ENCODE measurements at regions of chr19 and their contacts with region 1.

Region 1: GRCh38 chr19:54674021-54674617 is 11.3 kb downstream of the LILRB4 start:
- DNase-seq: no peak
- ATAC-seq: peak; percentile 79
- H3K4me3 ChIP-seq: no peak overlapping the region
- H3K27ac ChIP-seq: no peak overlapping the region
- H3K4me1 ChIP-seq: no peaks in the 10 kb centered on the region
- H3K27me3 ChIP-seq: peaks cover 0 to 5% of the 10 kb centered on the region in 2 experiments; a peak in 2 of 4 replicates
- CTCF ChIP-seq: peak; percentile 57 to 74 (median 74)
- EP300 ChIP-seq: no peak
- POLR2A ChIP-seq: no peak
- RAD21 ChIP-seq: peak; percentile 70

Region 2: DNA sequence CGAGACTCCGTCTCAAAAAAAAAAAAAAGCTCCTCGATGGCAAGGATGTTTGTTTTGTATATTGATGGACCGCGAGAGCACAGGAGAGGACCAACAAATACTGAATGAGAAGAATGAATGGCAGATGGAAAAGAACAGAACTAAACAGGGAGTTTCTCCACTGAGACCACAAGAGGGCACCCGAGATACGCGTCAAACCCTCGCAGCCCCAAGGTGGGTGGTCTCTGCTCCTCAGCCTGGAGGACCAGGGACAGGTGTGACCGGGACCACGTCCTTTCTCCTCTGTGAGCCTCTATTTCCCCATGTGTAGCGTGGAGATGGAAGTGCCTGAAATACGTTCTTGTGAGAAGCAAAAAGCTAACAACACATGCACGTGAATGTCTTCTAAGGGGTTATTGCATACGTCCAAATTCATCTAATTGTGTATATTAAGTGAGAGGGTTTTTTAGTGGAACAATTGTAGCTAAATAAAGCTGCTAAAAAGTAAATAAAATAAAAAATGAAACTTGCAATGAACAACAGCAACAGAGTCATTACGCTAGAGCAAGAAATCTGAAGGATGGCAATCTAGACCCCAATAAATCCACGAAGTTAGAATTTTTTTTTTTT is 192.7 kb before region 1 on chr19:
- CTCF ChIA-PET with region 1: interaction called, 236 read pairs
- POLR2A ChIA-PET with region 1: no interaction called
- RAD21 ChIA-PET with region 1: interaction called, 43 read pairs
- SMC1A ChIA-PET with region 1: interaction called, 118 read pairs
- in situ Hi-C with region 1: loop called (anchors 5 kb)
- intact Hi-C with region 1: loop called (anchors 1 kb)
- DNase-seq: no peak
- ATAC-seq: peak; percentile 69
- H3K4me3 ChIP-seq: no peak overlapping the region
- H3K27ac ChIP-seq: no peak overlapping the region
- H3K4me1 ChIP-seq: peaks cover 12% of the 10 kb centered on the region
- H3K27me3 ChIP-seq: no peaks in the 10 kb centered on the region; a peak in 1 of 4 replicates
- CTCF ChIP-seq: peak; percentile 61 to 74 (median 69)
- EP300 ChIP-seq: no peak
- POLR2A ChIP-seq: no peak
- RAD21 ChIP-seq: peak; percentile 83

Region 3: DNA sequence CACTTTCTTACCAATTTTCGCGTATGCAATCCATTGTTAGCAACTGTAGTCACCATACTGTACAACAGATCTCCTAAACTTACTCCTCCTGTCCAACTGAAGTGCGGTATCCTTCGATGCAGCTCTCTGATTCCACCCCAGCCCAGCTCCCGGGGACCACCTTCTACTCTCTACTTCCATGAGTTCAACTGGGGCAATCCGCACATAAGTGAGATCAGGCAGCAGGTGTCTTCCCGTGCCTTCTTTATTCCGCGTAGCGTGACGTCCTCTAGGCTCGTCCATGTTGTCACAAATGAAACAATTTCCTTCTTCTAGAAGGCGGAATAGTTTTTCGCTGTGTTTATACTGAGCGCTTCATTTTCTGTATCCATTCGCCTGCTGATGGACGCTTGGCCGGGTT is 35.4 kb before region 1 on chr19:
- CTCF ChIA-PET with region 1: interaction called, 14 read pairs
- POLR2A ChIA-PET with region 1: no interaction called
- RAD21 ChIA-PET with region 1: interaction called, 5 read pairs
- SMC1A ChIA-PET with region 1: interaction called, 4 read pairs
- in situ Hi-C with region 1: no loop called
- intact Hi-C with region 1: no loop called
- DNase-seq: no peak
- ATAC-seq: no peak
- H3K4me3 ChIP-seq: no peak overlapping the region
- H3K27ac ChIP-seq: no peak overlapping the region
- H3K4me1 ChIP-seq: peaks cover 4% of the 10 kb centered on the region
- H3K27me3 ChIP-seq: no peaks in the 10 kb centered on the region
- CTCF ChIP-seq: no peak
- EP300 ChIP-seq: no peak
- POLR2A ChIP-seq: no peak
- RAD21 ChIP-seq: no peak

Region 4: DNA sequence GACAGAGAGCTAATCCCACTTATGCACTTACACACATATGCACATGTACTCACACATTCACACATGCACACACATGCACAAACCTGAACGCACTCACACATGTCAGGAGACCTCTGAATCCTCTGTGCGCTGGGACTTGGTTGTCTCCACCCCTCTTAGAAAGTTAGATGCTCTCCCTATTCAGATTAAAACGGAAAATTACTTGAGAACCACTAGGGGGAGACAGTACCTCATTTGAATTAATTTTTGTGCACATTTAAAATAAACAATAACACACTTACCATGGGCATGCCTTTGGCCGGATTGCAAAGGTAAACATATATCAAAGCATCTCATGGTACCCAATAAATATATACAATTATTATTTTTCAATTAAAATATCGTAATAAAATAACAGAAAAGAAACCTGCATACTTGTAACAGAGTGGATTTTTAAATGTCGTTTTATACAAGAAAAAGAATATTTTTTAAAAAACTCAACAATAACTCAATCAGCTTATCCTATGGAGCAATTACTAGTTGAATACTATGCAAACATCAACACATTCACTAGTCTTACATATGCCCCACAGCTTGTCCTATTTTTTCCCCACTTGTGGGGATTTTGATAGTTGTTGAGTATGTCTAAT is 20.8 kb before region 1 on chr19:
- CTCF ChIA-PET with region 1: interaction called, 842 read pairs
- POLR2A ChIA-PET with region 1: interaction called, 27 read pairs
- RAD21 ChIA-PET with region 1: interaction called, 189 read pairs
- SMC1A ChIA-PET with region 1: interaction called, 268 read pairs
- in situ Hi-C with region 1: no loop called
- intact Hi-C with region 1: loop called (anchors 1 kb)
- DNase-seq: no peak
- ATAC-seq: peak; percentile 76
- H3K4me3 ChIP-seq: no peak overlapping the region
- H3K27ac ChIP-seq: no peak overlapping the region
- H3K4me1 ChIP-seq: peaks cover 5% of the 10 kb centered on the region
- H3K27me3 ChIP-seq: no peaks in the 10 kb centered on the region
- CTCF ChIP-seq: peak; percentile 51 to 67 (median 63)
- EP300 ChIP-seq: no peak
- POLR2A ChIP-seq: no peak
- RAD21 ChIP-seq: peak; percentile 75

Region 5: DNA sequence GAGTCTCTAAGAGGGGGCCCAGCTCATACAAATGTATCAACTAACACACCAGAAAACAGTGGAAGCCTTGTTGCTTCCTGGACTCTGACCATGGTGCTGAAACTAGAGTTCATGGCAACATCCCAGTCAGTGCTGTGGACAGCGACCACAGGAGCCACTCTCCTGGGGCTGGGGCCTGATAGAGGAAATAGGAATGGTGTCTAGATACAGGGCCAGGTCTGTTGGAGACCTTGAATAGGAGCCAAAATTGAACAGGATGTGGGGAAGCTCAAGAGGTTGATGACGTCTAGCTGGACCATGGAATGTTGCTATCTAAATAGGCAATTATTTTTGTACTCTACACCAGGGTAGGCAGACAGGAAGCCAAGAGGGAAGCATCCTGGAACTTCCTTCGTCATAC is 10.4 kb after region 1 on chr19:
- CTCF ChIA-PET with region 1: interaction called, 45 read pairs
- POLR2A ChIA-PET with region 1: interaction called, 4 read pairs
- RAD21 ChIA-PET with region 1: interaction called, 6 read pairs
- SMC1A ChIA-PET with region 1: interaction called, 4 read pairs
- in situ Hi-C with region 1: no loop called
- intact Hi-C with region 1: no loop called
- DNase-seq: no peak
- ATAC-seq: peak; percentile 52; the same call in 2 of the 3 replicates
- H3K4me3 ChIP-seq: no peak overlapping the region
- H3K27ac ChIP-seq: no peak overlapping the region
- H3K4me1 ChIP-seq: no peaks in the 10 kb centered on the region
- H3K27me3 ChIP-seq: no peaks in the 10 kb centered on the region; a peak in 1 of 4 replicates
- CTCF ChIP-seq: no peak
- EP300 ChIP-seq: no peak
- POLR2A ChIP-seq: no peak
- RAD21 ChIP-seq: no peak

Measured in GM12878 (cell line).